Psoas muscle (tissue), 8 donors: ENCODE measurements at regions of chr18 and their contacts with region 1.

Region 1: DNA sequence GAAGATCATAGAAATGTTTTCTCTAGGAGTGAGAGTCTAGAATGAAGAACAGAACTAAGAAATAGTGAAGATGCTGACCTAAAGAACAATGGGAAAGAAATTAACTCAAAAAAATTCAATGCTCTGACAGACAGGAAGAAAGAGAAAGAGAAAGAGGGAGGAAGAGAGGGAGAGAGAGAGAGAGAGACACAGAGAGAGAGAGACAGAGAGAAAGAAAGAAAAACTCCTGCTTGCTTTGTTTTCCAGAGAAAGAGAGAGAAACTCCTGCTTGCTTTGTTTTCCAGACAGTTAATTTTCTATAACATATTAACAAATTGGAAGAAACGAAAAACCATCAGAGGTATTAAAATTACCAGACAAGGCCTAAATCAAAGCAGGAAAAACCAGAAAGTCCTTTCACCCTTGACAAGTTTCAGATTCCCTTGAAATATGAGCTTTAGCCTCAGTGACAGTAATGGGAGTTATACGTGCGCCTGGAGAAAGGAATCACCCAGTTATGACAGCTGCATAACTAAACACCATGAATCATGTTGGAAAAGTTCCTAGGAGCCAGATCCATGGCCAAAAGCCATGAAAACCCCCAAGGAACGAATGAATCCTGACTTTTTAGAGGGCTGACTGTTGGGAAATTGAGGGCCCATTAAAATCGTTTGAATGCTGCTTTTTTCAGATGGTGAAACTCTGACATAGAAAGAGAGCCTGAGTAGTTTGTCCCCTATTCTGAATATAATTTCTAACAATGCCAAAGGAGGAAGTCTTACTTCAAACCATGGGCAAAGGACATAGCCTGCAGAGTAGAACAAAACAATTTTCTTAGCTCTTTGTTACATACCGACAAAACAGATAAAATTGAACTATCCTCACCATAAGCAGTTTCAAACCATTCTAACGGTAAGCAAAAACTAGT is 228.6 kb upstream of the CHST9 start:
- DNase-seq: peak in 1 of 2 donors; percentile 25
- ATAC-seq: peak; percentile 94 to 99 (median 98)
- H3K4me3 ChIP-seq: peak overlapping the region; percentile 46
- H3K27ac ChIP-seq: peak overlapping the region; percentile 84
- H3K4me1 ChIP-seq: peaks cover 24% of the 10 kb centered on the region
- H3K27me3 ChIP-seq: no peaks in the 10 kb centered on the region
- CTCF ChIP-seq: no peak

Region 2: GRCh38 chr18:27378431-27379095 is 35.2 kb before region 1 on chr18:
- intact Hi-C with region 1: loop called in 1 of 2 experiments (anchors 5 kb)
- DNase-seq: no peak
- ATAC-seq: peak; percentile 71 to 92 (median 82)
- H3K4me3 ChIP-seq: no peak overlapping the region
- H3K27ac ChIP-seq: peak overlapping the region; percentile 43
- H3K4me1 ChIP-seq: peaks cover 5% of the 10 kb centered on the region
- H3K27me3 ChIP-seq: no peaks in the 10 kb centered on the region
- CTCF ChIP-seq: no peak

Region 3: DNA sequence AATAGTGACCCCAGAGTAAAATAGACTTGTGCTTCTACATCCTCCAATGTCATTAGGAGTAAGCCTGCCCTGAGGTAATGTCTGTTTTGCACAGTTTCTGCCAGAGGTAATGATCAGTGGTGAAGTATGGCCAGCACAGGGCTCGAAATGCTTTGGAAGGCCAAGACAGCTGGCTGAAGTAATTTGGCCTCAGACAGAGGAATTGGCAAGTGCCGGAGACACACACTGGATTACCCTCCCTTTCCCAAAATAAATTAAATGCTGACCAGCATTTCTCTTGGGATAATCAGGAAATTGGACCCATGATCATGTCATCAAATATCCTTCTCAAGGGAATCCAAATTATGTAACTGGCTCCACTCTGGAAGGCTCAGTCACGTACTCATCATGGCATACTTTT is 150.3 kb after region 1 on chr18:
- intact Hi-C with region 1: loop called in 1 of 2 experiments (anchors 5 kb)
- DNase-seq: peak in 1 of 2 donors; percentile 57
- ATAC-seq: peak; percentile 88 to 96 (median 92)
- H3K4me3 ChIP-seq: no peak overlapping the region
- H3K27ac ChIP-seq: peak overlapping the region; percentile 73
- H3K4me1 ChIP-seq: peaks cover 11% of the 10 kb centered on the region
- H3K27me3 ChIP-seq: no peaks in the 10 kb centered on the region
- CTCF ChIP-seq: no peak